ENCODE measurements at regions of chr19 and their contacts with region 1.

Region 1: GRCh38 chr19:1039646-1040475 is at the start of gene ABCA7:
- DNase-seq: peak; percentile 98
- H3K4me3 ChIP-seq: peak within 1 kb of the TSS; percentile 56 to 61 (median 58)
- H3K27ac ChIP-seq: peak within 1 kb of the TSS; percentile 49 to 71 (median 54)
- H3K4me1 ChIP-seq: peaks cover 23 to 47% (median 34%) of the 10 kb centered on the region in 4 donors
- H3K27me3 ChIP-seq: peaks cover 0 to 11% (median 0%) of the 10 kb centered on the region in 4 donors
- CTCF ChIP-seq: peak in 1 of 3 experiments; percentile 31
- EP300 ChIP-seq: no peak
- POLR2A ChIP-seq: no peak
- total RNA-seq, gene ABCA7: 3.9 to 9.5 (median 6.9) TPM

Region 2: GRCh38 chr19:1094975-1095701 is 55.3 kb after region 1 on chr19 and contains the start of gene POLR2E:
- intact Hi-C with region 1: loop called (anchors 5 kb)
- DNase-seq: peak; percentile 99
- H3K4me3 ChIP-seq: peak within 1 kb of the TSS; percentile 70 to 99 (median 87)
- H3K27ac ChIP-seq: peak within 1 kb of the TSS; percentile 73 to 83 (median 77)
- H3K4me1 ChIP-seq: peaks cover 35 to 54% (median 47%) of the 10 kb centered on the region in 4 donors
- H3K27me3 ChIP-seq: no peaks in the 10 kb centered on the region
- CTCF ChIP-seq: no peak
- EP300 ChIP-seq: no peak
- POLR2A ChIP-seq: peak; percentile 58
- total RNA-seq, gene POLR2E: 96.8 to 198 (median 135) TPM

Measured in esophagus muscularis mucosa (tissue), 4 donors.